Endothelial cell of umbilical vein (primary cell): ENCODE measurements at regions of chr1 and their contacts with region 1.

Region 1: GRCh38 chr1:116498789-116499628 is 71.8 kb downstream of the CD58 start:
- DNase-seq: peak; percentile 77
- H3K4me3 ChIP-seq: no peak overlapping the region
- H3K27ac ChIP-seq: no peak overlapping the region
- H3K4me1 ChIP-seq: peaks cover 5% of the 10 kb centered on the region
- H3K27me3 ChIP-seq: no peaks in the 10 kb centered on the region
- CTCF ChIP-seq: peak; percentile 70 to 84
- POLR2A ChIP-seq: no peak

Region 2: GRCh38 chr1:115609021-115609420 is 890.0 kb before region 1 on chr1:
- CTCF ChIA-PET with region 1: interaction called, 10 read pairs
- POLR2A ChIA-PET with region 1: no interaction called
- dilution Hi-C with region 1: no loop called
- intact Hi-C with region 1: no loop called
- DNase-seq: no peak
- H3K4me3 ChIP-seq: no peak overlapping the region
- H3K27ac ChIP-seq: no peak overlapping the region
- H3K4me1 ChIP-seq: no peaks in the 10 kb centered on the region
- H3K27me3 ChIP-seq: peaks cover 2 to 3% of the 10 kb centered on the region in 2 experiments
- CTCF ChIP-seq: no peak
- POLR2A ChIP-seq: no peak

Region 3: GRCh38 chr1:115807723-115808122 is 691.3 kb before region 1 on chr1:
- CTCF ChIA-PET with region 1: interaction called, 23 read pairs
- POLR2A ChIA-PET with region 1: no interaction called
- dilution Hi-C with region 1: no loop called
- intact Hi-C with region 1: loop called (anchors 1 kb)
- DNase-seq: peak; percentile 62
- H3K4me3 ChIP-seq: no peak overlapping the region
- H3K27ac ChIP-seq: no peak overlapping the region
- H3K4me1 ChIP-seq: peaks cover 14% of the 10 kb centered on the region
- H3K27me3 ChIP-seq: peaks cover 5 to 8% of the 10 kb centered on the region in 2 experiments
- CTCF ChIP-seq: peak; percentile 61 to 70
- POLR2A ChIP-seq: no peak

Region 4: DNA sequence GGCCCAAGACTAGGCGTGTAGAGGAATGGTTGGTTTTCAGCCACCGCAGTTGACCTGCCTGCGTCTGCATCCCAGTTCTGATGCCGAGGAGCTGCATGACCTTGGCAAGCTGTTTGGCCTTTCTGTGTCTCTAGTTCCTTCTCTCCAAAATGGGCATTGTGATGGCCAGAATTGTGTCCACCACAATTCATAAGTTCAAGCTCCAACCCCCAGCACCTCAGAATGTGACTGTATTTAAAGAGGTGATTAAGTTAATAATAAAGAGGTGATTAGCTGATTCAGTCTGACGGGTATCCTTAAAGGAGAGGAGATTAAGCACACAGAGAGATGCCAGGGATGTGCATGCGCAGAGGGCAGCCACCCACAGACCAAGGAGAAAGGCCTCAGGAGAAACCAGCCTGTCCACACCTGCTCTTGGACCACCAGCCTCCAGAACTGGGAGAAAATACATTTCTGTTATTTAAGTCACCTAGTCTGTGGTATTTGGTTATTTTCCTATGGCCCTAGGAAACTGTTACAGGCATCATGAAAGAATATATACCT is 359.3 kb before region 1 on chr1:
- CTCF ChIA-PET with region 1: interaction called, 479 read pairs
- POLR2A ChIA-PET with region 1: interaction called, 4 read pairs
- dilution Hi-C with region 1: no loop called
- intact Hi-C with region 1: loop called (anchors 1 kb)
- DNase-seq: no peak
- H3K4me3 ChIP-seq: no peak overlapping the region
- H3K27ac ChIP-seq: no peak overlapping the region
- H3K4me1 ChIP-seq: peaks cover 2% of the 10 kb centered on the region
- H3K27me3 ChIP-seq: peaks cover 0 to 10% of the 10 kb centered on the region in 2 experiments
- CTCF ChIP-seq: no peak
- POLR2A ChIP-seq: no peak

Region 5: GRCh38 chr1:116168277-116169097 is 330.5 kb before region 1 on chr1:
- CTCF ChIA-PET with region 1: interaction called, 9 read pairs
- POLR2A ChIA-PET with region 1: no interaction called
- dilution Hi-C with region 1: no loop called
- intact Hi-C with region 1: loop called (anchors 1 kb)
- DNase-seq: peak; percentile 53
- H3K4me3 ChIP-seq: peak overlapping the region in 2 of 3 experiments; percentile 13 to 49
- H3K27ac ChIP-seq: no peak overlapping the region
- H3K4me1 ChIP-seq: no peaks in the 10 kb centered on the region
- H3K27me3 ChIP-seq: peaks cover 5 to 14% of the 10 kb centered on the region in 2 experiments
- CTCF ChIP-seq: peak; percentile 94 to 95
- POLR2A ChIP-seq: no peak

Region 6: DNA sequence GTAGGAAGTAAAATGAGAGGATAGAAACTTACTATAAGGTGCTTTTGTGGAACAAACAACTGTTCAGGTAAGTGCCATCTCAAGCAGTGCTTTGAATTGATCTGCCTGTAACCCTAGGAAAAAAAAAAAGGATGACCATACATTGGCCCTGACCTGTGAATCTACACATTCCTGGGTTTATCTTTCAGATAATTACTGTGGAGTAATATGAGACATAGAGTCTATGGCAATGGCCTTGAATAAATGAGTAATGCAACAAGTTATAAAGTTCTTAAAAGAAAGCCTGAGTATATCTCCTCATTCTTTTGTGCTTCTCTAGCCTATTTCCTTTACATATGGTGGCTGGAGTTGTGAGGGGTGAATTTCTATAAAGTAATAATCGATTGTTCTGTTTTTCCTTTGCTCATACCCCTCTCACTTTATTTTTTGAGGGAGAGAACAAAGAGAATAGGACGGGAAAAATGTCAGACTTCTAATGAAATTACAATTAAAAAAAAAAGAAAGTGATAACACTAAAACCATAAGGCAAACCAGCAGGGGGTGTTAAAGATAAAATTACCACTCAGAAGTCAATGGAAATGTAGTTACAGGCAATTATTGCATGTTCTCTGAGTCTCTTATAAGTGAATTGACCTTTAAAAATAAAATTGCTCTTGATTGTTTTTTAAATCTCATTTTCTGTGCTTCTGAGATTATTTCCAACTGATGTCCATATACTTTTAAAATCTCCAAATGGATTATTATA is 138.4 kb before region 1 on chr1:
- CTCF ChIA-PET with region 1: interaction called, 15 read pairs
- POLR2A ChIA-PET with region 1: no interaction called
- dilution Hi-C with region 1: no loop called
- intact Hi-C with region 1: loop called (anchors 1 kb)
- DNase-seq: peak; percentile 65
- H3K4me3 ChIP-seq: no peak overlapping the region
- H3K27ac ChIP-seq: no peak overlapping the region
- H3K4me1 ChIP-seq: peaks cover 21% of the 10 kb centered on the region
- H3K27me3 ChIP-seq: peaks cover 0 to 3% of the 10 kb centered on the region in 2 experiments
- CTCF ChIP-seq: peak; percentile 26 to 27
- POLR2A ChIP-seq: no peak

Region 7: GRCh38 chr1:116553386-116554115 is 54.5 kb after region 1 on chr1:
- CTCF ChIA-PET with region 1: no interaction called
- POLR2A ChIA-PET with region 1: no interaction called
- dilution Hi-C with region 1: no loop called
- intact Hi-C with region 1: no loop called
- DNase-seq: no peak
- H3K4me3 ChIP-seq: no peak overlapping the region
- H3K27ac ChIP-seq: no peak overlapping the region
- H3K4me1 ChIP-seq: peaks cover 2% of the 10 kb centered on the region
- H3K27me3 ChIP-seq: no peaks in the 10 kb centered on the region
- CTCF ChIP-seq: no peak
- POLR2A ChIP-seq: no peak